ENCODE measurements at regions of chr10 and their contacts with region 1.

Region 1: GRCh38 chr10:92502296-92502808 is 71.5 kb downstream of the IDE start:
- DNase-seq: no peak
- H3K4me3 ChIP-seq: no peak overlapping the region
- H3K4me3 Mint-ChIP-seq: no peak overlapping the region
- H3K27ac Mint-ChIP-seq: no peak overlapping the region
- H3K4me1 ChIP-seq: no peaks in the 10 kb centered on the region
- H3K4me1 Mint-ChIP-seq: no peaks in the 10 kb centered on the region
- H3K27me3 ChIP-seq: no peaks in the 10 kb centered on the region
- H3K27me3 Mint-ChIP-seq: no peaks in the 10 kb centered on the region
- CTCF ChIP-seq: no peak

Region 2: DNA sequence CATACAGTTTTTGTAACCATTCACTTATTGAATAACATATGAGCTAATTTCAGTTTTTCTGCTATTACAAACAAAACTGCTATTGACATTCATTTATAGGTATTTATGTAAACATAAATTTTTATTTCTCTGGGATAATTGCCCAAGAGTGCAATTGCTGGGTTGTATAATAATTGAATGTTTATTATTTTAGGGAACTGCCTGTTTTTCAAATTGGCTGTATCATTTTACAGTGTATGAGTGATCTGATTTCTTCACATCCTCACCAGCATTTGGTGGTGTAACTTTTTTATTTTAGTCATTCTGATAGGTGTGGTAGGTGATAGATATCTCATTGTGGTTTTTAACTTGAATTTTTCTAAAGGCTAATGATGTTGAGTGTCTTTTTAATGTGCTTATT is 117.0 kb after region 1 on chr10:
- CTCF ChIA-PET with region 1: no interaction called
- POLR2A ChIA-PET with region 1: no interaction called
- intact Hi-C with region 1: no loop called
- DNase-seq: no peak
- H3K4me3 ChIP-seq: no peak overlapping the region
- H3K4me3 Mint-ChIP-seq: no peak overlapping the region
- H3K27ac Mint-ChIP-seq: no peak overlapping the region
- H3K4me1 ChIP-seq: no peaks in the 10 kb centered on the region
- H3K4me1 Mint-ChIP-seq: no peaks in the 10 kb centered on the region
- H3K27me3 ChIP-seq: no peaks in the 10 kb centered on the region
- H3K27me3 Mint-ChIP-seq: no peaks in the 10 kb centered on the region
- CTCF ChIP-seq: no peak

Region 3: DNA sequence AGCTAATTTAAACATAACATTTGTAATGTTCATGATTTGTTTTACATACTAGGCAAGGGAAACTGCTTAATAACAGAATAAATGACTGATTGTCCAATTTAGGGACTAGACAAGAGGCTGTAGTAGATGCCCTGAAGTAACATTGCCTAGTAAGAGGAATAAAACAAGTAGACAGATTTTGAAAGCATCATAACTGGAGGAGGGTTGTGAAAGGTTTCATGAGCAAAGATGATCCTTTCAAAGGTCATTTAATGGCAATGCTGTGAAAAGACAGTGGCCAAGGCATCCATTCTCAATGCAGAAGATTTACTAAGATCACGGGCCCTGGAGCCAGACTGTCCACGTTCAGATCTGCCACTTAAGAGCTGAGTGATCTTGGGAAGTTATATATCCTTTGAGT is 142.6 kb after region 1 on chr10:
- CTCF ChIA-PET with region 1: no interaction called
- POLR2A ChIA-PET with region 1: no interaction called
- intact Hi-C with region 1: loop called (anchors 5 kb)
- DNase-seq: no peak
- H3K4me3 ChIP-seq: no peak overlapping the region
- H3K4me3 Mint-ChIP-seq: no peak overlapping the region
- H3K27ac Mint-ChIP-seq: no peak overlapping the region
- H3K4me1 ChIP-seq: peaks cover 9% of the 10 kb centered on the region
- H3K4me1 Mint-ChIP-seq: peaks cover 8% of the 10 kb centered on the region
- H3K27me3 ChIP-seq: no peaks in the 10 kb centered on the region
- H3K27me3 Mint-ChIP-seq: no peaks in the 10 kb centered on the region
- CTCF ChIP-seq: no peak

Measured in Caco-2 (cell line).